Heart right ventricle (tissue), 16 donors: ENCODE measurements at regions of chr6 and their contacts with region 1.

Region 1: DNA sequence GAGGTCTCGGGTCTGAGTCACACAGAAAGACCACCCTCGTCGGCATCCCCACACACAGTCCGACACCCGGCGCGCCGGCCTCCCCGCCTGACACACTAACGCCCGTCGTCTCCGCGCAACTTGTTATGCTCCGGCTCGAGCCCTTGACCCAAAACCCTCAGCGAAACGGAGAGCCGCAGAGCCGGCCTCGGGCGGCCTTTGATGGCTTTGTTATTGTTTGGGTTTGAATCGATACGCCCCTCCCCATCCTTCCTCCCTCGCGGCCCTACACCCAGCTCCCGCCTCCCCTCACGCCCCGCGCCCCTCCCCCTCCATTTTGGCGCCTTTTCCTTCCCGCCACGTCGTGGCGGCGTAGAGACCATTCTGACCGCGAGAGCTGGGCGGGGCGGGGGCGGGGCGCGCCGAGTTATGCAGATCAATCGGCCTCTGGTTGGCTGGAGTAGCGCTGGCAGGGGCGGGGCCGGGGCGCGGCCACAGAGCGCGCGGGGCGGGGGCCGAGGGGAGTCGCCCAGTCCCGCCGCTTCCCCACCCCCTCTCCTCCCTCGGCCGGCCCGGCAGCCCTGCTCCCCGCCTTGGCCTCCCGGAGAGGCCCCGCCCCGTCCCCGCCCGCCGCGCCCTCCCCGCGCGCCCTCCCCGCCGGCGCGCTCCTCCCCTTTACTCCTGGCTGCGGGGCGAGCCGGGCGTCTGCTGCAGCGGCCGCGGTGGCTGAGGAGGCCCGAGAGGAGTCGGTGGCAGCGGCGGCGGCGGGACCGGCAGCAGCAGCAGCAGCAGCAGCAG is at the start of gene PIM1:
- DNase-seq: peak; percentile 99 to 100
- ATAC-seq: peak; percentile 92 to 97 (median 94)
- H3K4me3 ChIP-seq: peak within 1 kb of the TSS; percentile 74 to 96 (median 92)
- H3K27ac ChIP-seq: peak within 1 kb of the TSS; percentile 75 to 97 (median 92)
- H3K4me1 ChIP-seq: peaks cover 0 to 45% (median 30%) of the 10 kb centered on the region in 9 donors
- H3K27me3 ChIP-seq: no peaks in the 10 kb centered on the region
- CTCF ChIP-seq: no peak
- total RNA-seq, gene PIM1: 9.2 to 106 (median 18.0) TPM

Region 2: GRCh38 chr6:37018198-37019064 is 151.3 kb before region 1 on chr6:
- intact Hi-C with region 1: loop called in 5 of 10 experiments (anchors 1 to 10 kb)
- DNase-seq: peak; percentile 89 to 90
- ATAC-seq: peak; percentile 92 to 98 (median 96)
- H3K4me3 ChIP-seq: no peak overlapping the region
- H3K27ac ChIP-seq: peak overlapping the region in 7 of 10 donors; percentile 10 to 47 (median 38)
- H3K4me1 ChIP-seq: peaks cover 2 to 23% (median 8%) of the 10 kb centered on the region in 9 donors
- H3K27me3 ChIP-seq: no peaks in the 10 kb centered on the region
- CTCF ChIP-seq: peak; percentile 63 to 85 (median 83)

Region 3: GRCh38 chr6:37051138-37052026 is 118.3 kb before region 1 on chr6:
- intact Hi-C with region 1: loop called in 9 of 10 experiments (anchors 1 to 2 kb)
- DNase-seq: peak; percentile 88 to 93
- ATAC-seq: peak; percentile 77 to 90 (median 83)
- H3K4me3 ChIP-seq: peak overlapping the region in 1 of 10 donors; percentile 31
- H3K27ac ChIP-seq: peak overlapping the region in 5 of 10 donors; percentile 46 to 93 (median 73)
- H3K4me1 ChIP-seq: peaks cover 6 to 58% (median 19%) of the 10 kb centered on the region in 9 donors
- H3K27me3 ChIP-seq: no peaks in the 10 kb centered on the region
- CTCF ChIP-seq: peak; percentile 80 to 94 (median 91)

Region 4: GRCh38 chr6:37131104-37131959 is 38.4 kb before region 1 on chr6:
- intact Hi-C with region 1: loop called in 3 of 10 experiments (anchors 2 to 5 kb)
- DNase-seq: peak; percentile 51 to 82
- ATAC-seq: peak; percentile 82 to 93 (median 88)
- H3K4me3 ChIP-seq: peak overlapping the region in 1 of 10 donors; percentile 3
- H3K27ac ChIP-seq: peak overlapping the region; percentile 56 to 89 (median 72)
- H3K4me1 ChIP-seq: peaks cover 0 to 60% (median 24%) of the 10 kb centered on the region in 9 donors
- H3K27me3 ChIP-seq: no peaks in the 10 kb centered on the region
- CTCF ChIP-seq: peak in 1 of 9 donors; percentile 8